ENCODE measurements at regions of chr15 and their contacts with region 1.

Region 1: GRCh38 chr15:79837846-79838245 is 59.0 kb downstream of the MTHFS start:
- DNase-seq: no peak
- ATAC-seq: no peak
- H3K4me3 ChIP-seq: no peak overlapping the region
- H3K27ac ChIP-seq: no peak overlapping the region
- H3K4me1 ChIP-seq: peaks cover 4% of the 10 kb centered on the region; the same call in 1 of the 2 replicates
- H3K27me3 ChIP-seq: no peaks in the 10 kb centered on the region
- CTCF ChIP-seq: no peak

Region 2: DNA sequence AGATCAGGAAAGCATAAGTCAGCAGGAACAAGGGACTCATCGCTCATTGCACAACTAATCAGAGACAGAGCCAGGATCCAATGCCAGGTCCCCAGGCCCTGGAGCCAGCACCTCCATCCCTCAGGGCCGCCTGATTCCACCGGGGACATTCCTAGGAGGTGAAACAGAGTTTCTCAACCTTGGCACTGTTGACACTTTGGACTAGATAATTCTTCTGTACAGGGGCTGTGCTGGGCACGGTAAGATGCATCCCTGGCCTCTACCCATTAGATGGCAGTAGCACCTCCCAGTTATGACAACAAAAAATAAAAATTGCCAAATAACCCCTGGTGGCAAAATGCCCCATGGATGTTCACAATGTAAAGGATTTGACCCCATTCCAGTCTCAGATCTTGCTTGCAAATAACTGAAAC is 68.8 kb before region 1 on chr15:
- CTCF ChIA-PET with region 1: no interaction called
- POLR2A ChIA-PET with region 1: no interaction called
- intact Hi-C with region 1: loop called (anchors 5 kb)
- DNase-seq: peak; percentile 71
- ATAC-seq: peak; percentile 55
- H3K4me3 ChIP-seq: no peak overlapping the region
- H3K27ac ChIP-seq: no peak overlapping the region
- H3K4me1 ChIP-seq: peaks cover 6% of the 10 kb centered on the region; the same call in 1 of the 2 replicates
- H3K27me3 ChIP-seq: peaks cover 40% of the 10 kb centered on the region
- CTCF ChIP-seq: peak; percentile 71

Region 3: GRCh38 chr15:79853458-79854328 is 15.8 kb after region 1 on chr15:
- CTCF ChIA-PET with region 1: no interaction called
- POLR2A ChIA-PET with region 1: no interaction called
- intact Hi-C with region 1: no loop called
- DNase-seq: peak; percentile 90
- ATAC-seq: peak; percentile 99
- H3K4me3 ChIP-seq: no peak overlapping the region
- H3K27ac ChIP-seq: no peak overlapping the region
- H3K4me1 ChIP-seq: peaks cover 7% of the 10 kb centered on the region
- H3K27me3 ChIP-seq: no peaks in the 10 kb centered on the region
- CTCF ChIP-seq: peak; percentile 94

Measured in PC-3 (cell line).